ENCODE measurements at regions of chr6 and their contacts with region 1.

Region 1: GRCh38 chr6:157981395-157982296 is at the start of gene SYNJ2:
- DNase-seq: peak; percentile 92
- total RNA-seq, gene SYNJ2: 19.6 to 30.4 TPM

Region 2: GRCh38 chr6:157912326-157912725 is 69.3 kb before region 1 on chr6:
- intact Hi-C with region 1: no loop called
- DNase-seq: no peak

Region 3: DNA sequence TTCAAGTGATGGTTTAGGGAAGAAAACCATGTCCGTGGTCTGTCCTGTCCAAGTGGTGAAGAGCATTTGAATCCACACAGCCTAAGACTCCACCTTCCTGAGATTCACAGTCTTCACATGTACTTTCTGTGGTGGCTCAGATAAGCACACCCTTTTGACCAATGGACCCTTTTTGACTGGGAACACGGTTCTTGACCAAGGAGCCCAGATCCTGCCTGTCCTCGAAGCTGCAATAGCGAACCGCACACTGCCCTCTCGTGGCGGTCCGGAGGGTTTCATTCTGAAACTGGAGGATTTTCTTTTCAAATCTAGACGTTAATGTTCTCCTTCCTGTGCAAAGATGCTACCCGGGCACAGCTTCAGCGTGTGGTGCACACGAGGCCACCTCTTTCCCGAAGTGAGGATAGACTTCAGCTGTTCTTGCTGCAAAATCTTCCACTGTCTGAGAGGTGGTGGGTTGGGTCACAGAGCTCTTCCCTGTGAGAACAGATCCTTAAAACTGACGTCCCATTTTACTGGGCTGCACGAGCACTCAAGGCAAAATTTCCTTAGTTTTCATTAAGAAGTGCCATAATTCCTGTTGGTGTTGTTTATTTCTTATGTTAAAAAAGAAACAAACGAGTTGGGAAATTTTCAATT is 90.6 kb after region 1 on chr6:
- intact Hi-C with region 1: loop called in 1 of 2 experiments (anchors 2 kb)
- DNase-seq: peak; percentile 92